AG04450 (cell line): ENCODE measurements at regions of chr11 and their contacts with region 1.

Region 1: DNA sequence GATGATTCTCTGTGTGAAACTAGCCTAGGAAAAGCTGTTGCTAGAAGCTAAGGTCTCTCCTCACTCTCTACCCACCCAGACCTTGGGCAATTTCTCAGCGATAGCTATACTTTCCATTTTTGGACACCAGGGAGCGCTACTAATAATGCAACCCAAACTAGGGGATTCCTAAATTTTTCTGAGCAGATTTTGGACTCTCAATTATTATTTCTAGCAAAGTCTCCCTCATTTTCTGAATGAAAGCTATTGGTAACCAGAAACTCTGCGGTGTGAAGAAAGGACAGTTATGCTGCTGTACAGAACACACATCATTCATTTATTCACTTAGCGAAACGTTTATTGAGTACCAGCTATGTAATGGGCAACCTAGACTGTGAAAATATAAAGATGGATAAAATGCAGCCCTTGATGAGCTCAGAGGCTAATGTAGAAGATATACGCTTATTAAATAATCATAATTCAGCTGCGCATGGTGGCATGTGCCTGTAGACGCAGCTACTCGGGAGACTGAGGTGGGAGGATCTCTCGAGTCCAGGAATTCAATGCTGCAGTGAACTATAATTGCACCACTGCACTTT is 6.1 kb upstream of the STIM1 start:
- DNase-seq: no peak
- H3K4me3 ChIP-seq: no peak overlapping the region
- H3K27ac ChIP-seq: no peak overlapping the region
- H3K27me3 ChIP-seq: peaks cover 4% of the 10 kb centered on the region
- CTCF ChIP-seq: peak; percentile 80

Region 2: GRCh38 chr11:3675971-3676370 is 173.4 kb before region 1 on chr11:
- CTCF ChIA-PET with region 1: no interaction called
- POLR2A ChIA-PET with region 1: no interaction called
- DNase-seq: no peak
- H3K4me3 ChIP-seq: no peak overlapping the region
- H3K27ac ChIP-seq: no peak overlapping the region
- H3K27me3 ChIP-seq: no peaks in the 10 kb centered on the region
- CTCF ChIP-seq: no peak

Region 3: GRCh38 chr11:3905080-3905953 is 55.9 kb after region 1 on chr11:
- CTCF ChIA-PET with region 1: interaction called, 17 read pairs
- POLR2A ChIA-PET with region 1: interaction called, 4 read pairs
- DNase-seq: no peak
- H3K4me3 ChIP-seq: no peak overlapping the region
- H3K27ac ChIP-seq: peak overlapping the region; percentile 39
- H3K27me3 ChIP-seq: no peaks in the 10 kb centered on the region
- CTCF ChIP-seq: no peak

Region 4: GRCh38 chr11:3950996-3951660 is 101.7 kb after region 1 on chr11:
- CTCF ChIA-PET with region 1: interaction called, 13 read pairs
- POLR2A ChIA-PET with region 1: no interaction called
- DNase-seq: peak; percentile 38
- H3K4me3 ChIP-seq: no peak overlapping the region
- H3K27ac ChIP-seq: no peak overlapping the region
- H3K27me3 ChIP-seq: no peaks in the 10 kb centered on the region
- CTCF ChIP-seq: no peak

Region 5: GRCh38 chr11:3984896-3985295 is 135.5 kb after region 1 on chr11:
- CTCF ChIA-PET with region 1: interaction called, 41 read pairs
- POLR2A ChIA-PET with region 1: interaction called, 3 read pairs
- DNase-seq: no peak
- H3K4me3 ChIP-seq: no peak overlapping the region
- H3K27ac ChIP-seq: no peak overlapping the region
- H3K27me3 ChIP-seq: no peaks in the 10 kb centered on the region
- CTCF ChIP-seq: no peak

Region 6: GRCh38 chr11:4039011-4039410 is 189.6 kb after region 1 on chr11:
- CTCF ChIA-PET with region 1: interaction called, 15 read pairs
- POLR2A ChIA-PET with region 1: no interaction called
- DNase-seq: no peak
- H3K4me3 ChIP-seq: no peak overlapping the region
- H3K27ac ChIP-seq: no peak overlapping the region
- H3K27me3 ChIP-seq: no peaks in the 10 kb centered on the region
- CTCF ChIP-seq: no peak

Region 7: DNA sequence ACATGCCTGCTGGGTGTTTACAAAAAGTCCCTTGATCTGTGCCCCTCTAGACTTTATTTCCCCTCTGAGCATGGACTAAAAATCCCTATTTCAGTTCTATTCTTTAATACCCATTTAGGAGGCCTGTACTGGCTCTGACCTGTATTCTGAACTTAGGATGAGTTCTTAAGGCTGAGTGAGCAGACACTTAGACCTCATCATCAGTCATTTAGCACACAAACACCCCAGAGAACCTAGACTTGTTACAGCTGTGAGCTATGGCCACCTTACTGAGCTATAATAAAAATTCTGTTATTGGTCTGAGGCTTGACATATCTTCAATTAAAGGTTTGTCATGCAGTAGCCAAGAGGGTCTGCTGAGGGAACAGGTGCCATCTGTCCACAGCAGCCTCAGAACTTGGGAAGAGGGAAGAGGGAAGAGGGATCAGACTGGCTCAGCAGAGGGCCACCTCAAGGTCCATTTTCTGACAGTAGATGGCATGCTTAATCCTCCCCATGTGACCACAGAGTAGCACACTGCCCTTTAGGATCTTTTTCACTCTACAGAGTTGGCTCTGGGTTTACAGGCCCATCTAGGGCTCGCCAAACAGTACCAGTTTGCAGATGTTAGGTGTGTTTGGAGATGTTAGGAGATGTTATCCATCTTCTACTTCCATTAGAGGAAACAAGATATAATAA is 215.0 kb after region 1 on chr11:
- CTCF ChIA-PET with region 1: interaction called, 1,559 read pairs
- POLR2A ChIA-PET with region 1: no interaction called
- DNase-seq: no peak
- H3K4me3 ChIP-seq: no peak overlapping the region
- H3K27ac ChIP-seq: no peak overlapping the region
- H3K27me3 ChIP-seq: no peaks in the 10 kb centered on the region
- CTCF ChIP-seq: no peak